A673 (cell line): ENCODE measurements at regions of chr15 and their contacts with region 1.

Region 1: DNA sequence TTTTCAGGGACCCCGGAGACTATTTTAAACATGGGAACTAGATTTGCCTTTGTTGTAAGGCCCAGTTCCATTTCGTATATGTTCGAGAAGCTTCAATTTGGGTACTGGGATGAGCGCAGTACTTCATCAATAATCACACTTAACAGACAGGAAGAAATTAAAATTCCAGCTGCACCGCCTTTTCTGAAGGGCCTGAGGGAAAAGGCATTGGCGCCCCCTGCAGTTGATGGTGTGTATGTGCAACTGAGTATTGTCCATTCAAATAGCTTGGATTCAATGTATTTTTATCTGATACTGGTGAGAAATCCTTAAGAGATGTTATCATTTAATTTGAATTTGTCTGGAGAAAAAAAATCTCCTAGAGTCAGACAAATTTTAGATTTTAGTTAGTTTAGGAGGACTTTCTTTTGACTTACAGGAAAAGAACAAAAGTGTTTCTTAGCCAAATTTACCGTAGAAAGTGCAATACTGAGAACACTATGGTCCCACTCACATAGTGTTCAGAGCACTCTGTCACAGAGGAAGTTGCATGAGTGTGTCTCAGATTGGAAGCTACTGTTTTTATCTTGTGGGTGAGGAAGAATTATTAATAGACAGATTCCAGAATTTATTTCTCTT is 5.4 kb upstream of the ALDH1A2 start:
- DNase-seq: peak; percentile 82
- H3K4me3 ChIP-seq: no peak overlapping the region
- H3K27ac ChIP-seq: no peak overlapping the region
- H3K4me1 ChIP-seq: peaks cover 3% of the 10 kb centered on the region
- H3K27me3 ChIP-seq: peaks cover 33% of the 10 kb centered on the region
- CTCF ChIP-seq: peak; percentile 97

Region 2: DNA sequence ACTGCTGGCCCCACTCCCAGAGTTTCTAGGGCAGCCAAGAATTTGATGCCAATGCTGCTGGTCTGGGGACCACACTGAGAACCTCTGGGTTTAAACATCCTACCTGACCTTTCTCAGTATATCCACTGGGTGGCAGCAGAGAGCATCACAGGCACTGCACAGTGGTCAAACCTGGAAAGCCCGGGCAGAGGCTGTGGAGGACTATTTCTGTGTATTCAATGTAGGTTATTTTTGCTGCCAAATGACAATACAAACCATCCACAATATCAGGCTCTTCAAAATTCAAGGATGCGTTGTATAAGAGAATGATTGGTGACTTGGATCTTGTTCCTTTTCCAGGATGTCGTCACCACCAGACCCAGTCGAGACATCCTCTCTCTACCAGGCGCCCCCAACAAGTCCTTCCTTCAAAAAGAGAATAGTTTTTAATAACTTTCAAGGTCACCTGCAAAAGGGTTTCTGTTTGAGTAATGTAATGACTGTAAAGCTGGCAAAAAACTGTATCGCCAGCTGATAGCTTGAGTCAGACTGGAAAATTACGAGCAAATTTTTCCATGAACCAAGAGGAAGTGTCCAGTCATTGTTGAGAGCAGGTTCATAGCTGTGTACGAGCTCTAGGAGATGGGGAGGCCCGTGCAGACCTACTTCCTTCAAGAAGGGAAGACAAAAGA is 509.7 kb before region 1 on chr15:
- CTCF ChIA-PET with region 1: interaction called, 3 read pairs
- POLR2A ChIA-PET with region 1: no interaction called
- intact Hi-C with region 1: loop called (anchors 2 kb)
- DNase-seq: peak; percentile 80
- H3K4me3 ChIP-seq: no peak overlapping the region
- H3K27ac ChIP-seq: no peak overlapping the region
- H3K4me1 ChIP-seq: no peaks in the 10 kb centered on the region
- H3K27me3 ChIP-seq: no peaks in the 10 kb centered on the region
- CTCF ChIP-seq: peak; percentile 91

Region 3: GRCh38 chr15:57732526-57733331 is 338.2 kb before region 1 on chr15:
- CTCF ChIA-PET with region 1: interaction called, 10 read pairs
- POLR2A ChIA-PET with region 1: no interaction called
- intact Hi-C with region 1: loop called (anchors 10 kb)
- DNase-seq: peak; percentile 68
- H3K4me3 ChIP-seq: no peak overlapping the region
- H3K27ac ChIP-seq: no peak overlapping the region
- H3K4me1 ChIP-seq: peaks cover 12% of the 10 kb centered on the region
- H3K27me3 ChIP-seq: no peaks in the 10 kb centered on the region
- CTCF ChIP-seq: peak; percentile 94

Region 4: DNA sequence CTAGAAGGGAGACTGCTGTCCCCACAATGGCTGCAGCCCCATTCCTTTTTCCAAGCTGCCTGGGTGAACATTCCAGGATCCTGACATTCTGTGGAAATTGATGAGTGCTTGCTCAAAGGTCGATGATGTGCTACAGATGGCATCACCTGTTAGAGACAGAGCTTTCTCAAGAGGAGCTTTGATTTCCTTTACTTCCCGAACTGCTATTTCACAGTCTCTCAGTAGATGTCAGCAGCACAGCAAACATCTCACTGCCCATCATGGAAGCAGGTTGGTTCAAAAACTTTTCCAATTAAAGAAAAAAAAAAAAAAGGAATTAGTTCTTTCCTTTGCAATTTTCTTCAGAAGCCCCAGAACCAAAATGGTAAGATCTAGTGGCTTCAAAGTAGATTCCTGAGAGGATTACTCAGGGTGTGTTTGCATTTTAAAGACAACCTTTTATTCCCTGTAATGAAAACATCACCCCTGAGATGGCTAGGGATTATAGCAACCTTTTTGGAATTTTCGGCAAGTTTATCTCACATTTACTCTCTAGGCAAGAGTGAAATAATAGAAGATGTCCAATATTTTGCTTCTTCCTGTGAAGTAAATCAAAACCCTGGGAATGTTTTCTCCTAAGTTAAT is 319.6 kb before region 1 on chr15:
- CTCF ChIA-PET with region 1: interaction called, 27 read pairs
- POLR2A ChIA-PET with region 1: no interaction called
- intact Hi-C with region 1: loop called (anchors 2 kb)
- DNase-seq: peak; percentile 43
- H3K4me3 ChIP-seq: no peak overlapping the region
- H3K27ac ChIP-seq: no peak overlapping the region
- H3K4me1 ChIP-seq: no peaks in the 10 kb centered on the region
- H3K27me3 ChIP-seq: no peaks in the 10 kb centered on the region
- CTCF ChIP-seq: peak; percentile 69

Region 5: GRCh38 chr15:57969354-57969753 is 101.6 kb before region 1 on chr15:
- CTCF ChIA-PET with region 1: interaction called, 3 read pairs
- POLR2A ChIA-PET with region 1: no interaction called
- intact Hi-C with region 1: loop called (anchors 5 kb)
- DNase-seq: peak; percentile 9
- H3K4me3 ChIP-seq: no peak overlapping the region
- H3K27ac ChIP-seq: no peak overlapping the region
- H3K4me1 ChIP-seq: no peaks in the 10 kb centered on the region
- H3K27me3 ChIP-seq: no peaks in the 10 kb centered on the region
- CTCF ChIP-seq: peak; percentile 42